Activated CD8-positive, alpha-beta T cell treated with anti-CD3 and anti-CD28 coated beads, Interleukin-2, amount 10 ng/mL, durations not matched to agents 7 days and 5 days (primary cell): ENCODE measurements at regions of chr2 and their contacts with region 1.

Region 1: GRCh38 chr2:223993621-223994232 is 36.5 kb downstream of the MRPL44 start:
- DNase-seq: peak; percentile 78
- ATAC-seq: peak; percentile 81
- H3K4me3 Mint-ChIP-seq: no peak overlapping the region
- H3K27ac Mint-ChIP-seq: no peak overlapping the region
- H3K4me1 Mint-ChIP-seq: peaks cover 8% of the 10 kb centered on the region
- H3K27me3 Mint-ChIP-seq: no peaks in the 10 kb centered on the region

Region 2: DNA sequence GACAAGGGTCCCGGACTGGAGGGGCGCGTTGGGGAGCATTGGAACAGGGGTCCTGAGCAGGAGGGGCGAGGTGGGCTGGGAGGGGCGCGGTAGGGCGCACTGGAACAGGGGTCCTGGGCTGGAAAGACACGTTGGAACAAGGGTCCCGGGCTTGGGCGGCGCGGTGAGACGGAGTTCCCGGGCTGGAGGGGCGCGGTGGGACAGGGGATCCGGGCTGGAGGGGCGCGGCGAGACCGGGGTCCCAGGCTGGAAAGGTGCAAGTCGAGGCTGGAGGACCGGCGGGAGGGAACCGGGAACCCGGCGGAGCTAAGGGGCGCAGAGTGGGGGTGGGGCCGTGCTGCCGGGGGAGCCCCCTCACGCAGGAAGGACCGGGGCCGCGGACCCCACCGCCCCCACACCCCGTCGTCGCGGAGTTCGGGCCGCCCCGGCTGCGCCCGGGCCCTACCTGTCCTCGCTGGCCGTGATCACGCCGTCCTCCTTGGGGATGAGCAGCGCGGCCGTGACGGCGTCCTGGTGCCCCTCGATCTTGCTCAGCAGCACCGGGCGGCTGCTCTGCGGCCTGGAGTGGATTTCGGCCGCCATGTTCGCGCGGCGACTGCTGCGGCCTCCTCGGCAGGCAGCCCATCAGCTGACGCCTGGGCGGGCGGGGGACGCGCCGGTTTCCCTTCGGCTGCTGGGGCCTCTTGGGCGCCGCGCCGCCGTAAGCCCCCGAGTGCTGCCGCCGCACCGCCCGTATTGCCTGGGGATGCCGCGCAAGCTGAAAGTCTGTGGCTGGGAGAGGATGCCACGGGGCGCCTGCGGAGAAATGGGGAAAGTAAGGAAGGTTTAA is 48.8 kb before region 1 on chr2 and contains the start of gene WDFY1:
- CTCF ChIA-PET with region 1: no interaction called
- POLR2A ChIA-PET with region 1: no interaction called
- DNase-seq: peak; percentile 86
- ATAC-seq: peak; percentile 88
- H3K4me3 Mint-ChIP-seq: peak within 1 kb of the TSS; percentile 89
- H3K27ac Mint-ChIP-seq: peak within 1 kb of the TSS; percentile 91
- H3K4me1 Mint-ChIP-seq: peaks cover 60% of the 10 kb centered on the region
- H3K27me3 Mint-ChIP-seq: no peaks in the 10 kb centered on the region
- total RNA-seq, gene WDFY1: 41.5 to 47.1 TPM

Region 3: DNA sequence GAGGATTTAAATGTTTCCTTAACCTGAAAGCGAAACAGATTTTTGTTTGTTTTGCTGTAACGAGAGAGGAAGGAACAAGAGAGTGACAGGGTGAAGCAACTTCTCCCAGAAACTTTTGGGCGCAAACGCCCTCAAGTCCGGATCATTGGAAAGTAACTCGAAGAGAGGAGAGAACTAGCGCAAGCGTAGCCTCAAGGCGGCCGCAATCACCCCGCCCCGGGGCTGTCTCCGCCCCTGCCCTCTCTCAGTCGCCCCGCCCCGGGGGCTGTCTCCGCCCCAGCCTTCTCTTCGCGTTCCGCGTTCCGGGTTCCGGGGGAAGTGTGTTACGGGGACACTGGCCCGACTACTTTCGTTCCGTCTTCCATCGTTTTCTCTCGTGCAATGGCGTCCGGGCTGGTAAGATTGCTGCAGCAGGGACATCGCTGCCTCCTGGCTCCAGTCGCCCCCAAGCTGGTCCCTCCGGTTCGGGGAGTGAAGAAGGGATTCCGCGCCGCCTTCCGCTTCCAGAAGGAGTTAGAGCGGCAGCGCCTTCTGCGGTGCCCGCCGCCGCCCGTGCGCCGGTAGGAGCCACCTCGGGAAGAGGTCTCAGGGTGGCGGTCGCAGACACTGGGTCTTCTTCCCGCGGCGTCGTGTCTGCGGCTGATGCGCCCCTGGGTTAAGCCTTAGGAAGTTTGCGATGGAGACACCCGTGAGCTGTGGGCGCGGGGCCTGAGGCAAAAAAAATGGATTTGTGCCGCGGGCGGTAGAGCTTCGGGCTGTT is 36.5 kb before region 1 on chr2 and contains the start of gene MRPL44:
- CTCF ChIA-PET with region 1: interaction called, 10 read pairs
- POLR2A ChIA-PET with region 1: no interaction called
- DNase-seq: peak; percentile 97
- ATAC-seq: peak; percentile 99
- H3K4me3 Mint-ChIP-seq: peak within 1 kb of the TSS; percentile 96
- H3K27ac Mint-ChIP-seq: peak within 1 kb of the TSS; percentile 94
- H3K4me1 Mint-ChIP-seq: peaks cover 58% of the 10 kb centered on the region
- H3K27me3 Mint-ChIP-seq: no peaks in the 10 kb centered on the region
- total RNA-seq, gene MRPL44: 29.0 to 30.5 TPM

Region 4: GRCh38 chr2:223976635-223977226 is 17.0 kb before region 1 on chr2:
- CTCF ChIA-PET with region 1: interaction called, 76 read pairs
- POLR2A ChIA-PET with region 1: no interaction called
- DNase-seq: no peak
- ATAC-seq: no peak
- H3K4me3 Mint-ChIP-seq: no peak overlapping the region
- H3K27ac Mint-ChIP-seq: no peak overlapping the region
- H3K4me1 Mint-ChIP-seq: no peaks in the 10 kb centered on the region
- H3K27me3 Mint-ChIP-seq: no peaks in the 10 kb centered on the region

Region 5: GRCh38 chr2:224017957-224018356 is 24.2 kb after region 1 on chr2:
- CTCF ChIA-PET with region 1: interaction called, 12 read pairs
- POLR2A ChIA-PET with region 1: no interaction called
- DNase-seq: no peak
- ATAC-seq: no peak
- H3K4me3 Mint-ChIP-seq: no peak overlapping the region
- H3K27ac Mint-ChIP-seq: no peak overlapping the region
- H3K4me1 Mint-ChIP-seq: peaks cover 25% of the 10 kb centered on the region
- H3K27me3 Mint-ChIP-seq: no peaks in the 10 kb centered on the region

Region 6: DNA sequence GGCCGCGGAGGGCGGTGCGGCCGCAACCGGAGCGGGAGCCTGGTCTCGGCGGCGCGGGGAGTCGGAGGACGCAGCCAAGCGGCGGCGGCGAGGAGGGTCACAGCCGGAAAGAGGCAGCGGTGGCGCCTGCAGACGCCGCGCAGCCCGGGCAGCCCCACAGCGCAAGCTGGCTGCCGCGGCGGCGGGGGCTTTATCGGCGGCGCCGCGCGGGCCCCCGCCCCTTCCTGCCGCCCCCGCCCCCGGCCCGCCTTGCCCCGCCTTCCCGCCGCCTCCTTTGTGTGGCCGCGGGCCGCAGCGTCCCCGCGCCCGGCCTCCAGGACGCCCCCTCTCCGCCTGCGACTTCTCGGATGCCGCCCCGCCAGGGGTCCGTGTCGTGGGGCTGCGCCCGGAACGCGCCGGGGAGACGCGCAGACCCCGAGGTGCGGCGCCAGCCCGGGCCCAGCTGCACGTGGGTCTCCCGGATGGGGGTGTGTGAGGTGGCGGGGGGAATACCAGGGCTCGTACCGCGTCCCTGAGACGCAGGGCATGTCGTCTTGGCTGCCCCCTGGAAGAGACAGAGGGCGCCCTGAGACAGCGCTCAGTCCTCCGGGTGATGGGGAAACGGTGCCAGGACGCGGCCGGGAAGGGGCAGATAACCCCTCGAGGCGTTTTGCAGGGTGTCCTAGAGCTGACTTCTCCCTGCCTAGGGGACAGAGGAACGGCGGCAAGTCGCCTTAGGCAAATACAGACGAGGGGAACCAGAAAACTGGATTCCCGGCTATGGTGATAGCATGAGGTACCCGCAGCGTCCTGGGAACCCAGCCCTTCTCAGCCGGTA is 45.6 kb after region 1 on chr2 and contains the start of gene SERPINE2:
- CTCF ChIA-PET with region 1: interaction called, 34 read pairs
- POLR2A ChIA-PET with region 1: no interaction called
- DNase-seq: peak; percentile 58
- ATAC-seq: peak; percentile 77
- H3K4me3 Mint-ChIP-seq: peak within 1 kb of the TSS; percentile 84
- H3K27ac Mint-ChIP-seq: peak within 1 kb of the TSS; percentile 68
- H3K4me1 Mint-ChIP-seq: peaks cover 29% of the 10 kb centered on the region
- H3K27me3 Mint-ChIP-seq: peaks cover 41% of the 10 kb centered on the region
- total RNA-seq, gene SERPINE2: 22.2 to 22.5 TPM

Region 7: DNA sequence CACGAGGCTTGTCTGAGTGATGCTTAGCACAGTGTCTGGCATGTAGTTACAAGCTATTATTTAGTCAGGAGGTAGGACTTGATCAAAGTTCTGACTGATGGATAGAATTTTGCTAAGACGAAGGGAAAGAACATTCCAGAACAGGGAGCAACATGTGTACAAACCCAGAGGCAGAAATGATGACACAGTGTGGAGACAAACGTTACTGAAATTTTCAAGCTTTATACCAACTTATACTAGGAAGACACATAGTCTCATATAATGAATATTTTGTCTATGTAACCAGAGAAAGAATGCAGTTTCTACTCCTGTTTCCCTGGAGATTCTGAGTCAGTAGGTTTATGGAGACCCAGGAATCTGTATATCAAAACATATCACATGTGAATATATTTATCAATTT is 284.8 kb after region 1 on chr2:
- CTCF ChIA-PET with region 1: interaction called, 130 read pairs
- POLR2A ChIA-PET with region 1: interaction called, 3 read pairs
- DNase-seq: no peak
- ATAC-seq: no peak
- H3K4me3 Mint-ChIP-seq: no peak overlapping the region
- H3K27ac Mint-ChIP-seq: no peak overlapping the region
- H3K4me1 Mint-ChIP-seq: no peaks in the 10 kb centered on the region
- H3K27me3 Mint-ChIP-seq: peaks cover 31% of the 10 kb centered on the region

Region 8: DNA sequence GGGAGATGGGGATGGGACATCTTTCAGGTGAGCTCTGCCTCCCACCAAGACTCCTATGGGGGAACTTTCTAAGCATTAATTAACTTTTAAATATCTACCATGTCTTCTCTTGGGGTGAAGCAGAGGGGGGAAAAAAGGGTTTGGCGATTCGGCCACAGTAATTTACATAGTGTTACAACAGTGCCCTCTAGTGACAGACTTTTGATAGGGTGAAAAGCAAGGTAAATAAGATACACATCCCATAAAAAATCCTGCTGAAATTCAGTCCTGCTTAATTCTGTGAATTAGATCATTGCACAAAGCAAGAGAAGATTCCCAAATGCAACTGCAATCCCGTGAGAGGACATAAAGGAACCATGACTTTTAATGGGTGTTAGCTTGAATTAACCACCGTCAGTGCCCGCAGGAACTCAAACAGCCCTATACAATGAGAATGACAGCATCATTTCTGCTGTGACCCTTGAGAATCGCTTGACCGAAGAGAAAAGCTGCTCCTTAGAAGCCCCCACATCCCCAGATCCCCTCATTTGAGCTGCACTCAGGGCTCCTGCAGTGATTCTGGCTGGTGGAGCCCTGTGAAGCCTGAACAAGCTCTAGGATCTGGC is 375.4 kb after region 1 on chr2:
- CTCF ChIA-PET with region 1: interaction called, 11 read pairs
- POLR2A ChIA-PET with region 1: no interaction called
- DNase-seq: peak; percentile 34
- ATAC-seq: no peak
- H3K4me3 Mint-ChIP-seq: no peak overlapping the region
- H3K27ac Mint-ChIP-seq: no peak overlapping the region
- H3K4me1 Mint-ChIP-seq: no peaks in the 10 kb centered on the region
- H3K27me3 Mint-ChIP-seq: peaks cover 4% of the 10 kb centered on the region